ENCODE measurements at regions of chr7 and their contacts with region 1.

Region 1: GRCh38 chr7:48109848-48110663 is 21.0 kb downstream of the UPP1 start:
- DNase-seq: peak; percentile 64 to 75
- ATAC-seq: peak; percentile 63 to 82
- H3K4me3 ChIP-seq: no peak overlapping the region
- H3K27ac ChIP-seq: no peak overlapping the region
- H3K4me1 ChIP-seq: no peaks in the 10 kb centered on the region
- CTCF ChIP-seq: peak; percentile 98
- EP300 ChIP-seq: no peak
- POLR2A ChIP-seq: no peak
- RAD21 ChIP-seq: peak; percentile 96 to 97

Region 2: GRCh38 chr7:47937065-47937683 is 172.9 kb before region 1 on chr7:
- CTCF ChIA-PET with region 1: interaction called, 22 read pairs
- POLR2A ChIA-PET with region 1: no interaction called
- DNase-seq: no peak
- ATAC-seq: no peak
- H3K4me3 ChIP-seq: no peak overlapping the region
- H3K27ac ChIP-seq: no peak overlapping the region
- H3K4me1 ChIP-seq: peaks cover 13% of the 10 kb centered on the region
- CTCF ChIP-seq: no peak
- EP300 ChIP-seq: no peak
- POLR2A ChIP-seq: no peak
- RAD21 ChIP-seq: no peak

Region 3: GRCh38 chr7:47962262-47962661 is 147.8 kb before region 1 on chr7:
- CTCF ChIA-PET with region 1: interaction called, 13 read pairs
- POLR2A ChIA-PET with region 1: no interaction called
- DNase-seq: no peak
- ATAC-seq: no peak
- H3K4me3 ChIP-seq: no peak overlapping the region
- H3K27ac ChIP-seq: no peak overlapping the region
- H3K4me1 ChIP-seq: no peaks in the 10 kb centered on the region
- CTCF ChIP-seq: no peak
- EP300 ChIP-seq: no peak
- POLR2A ChIP-seq: no peak
- RAD21 ChIP-seq: no peak

Region 4: GRCh38 chr7:47991741-47992311 is 118.2 kb before region 1 on chr7:
- CTCF ChIA-PET with region 1: interaction called, 173 read pairs
- POLR2A ChIA-PET with region 1: no interaction called
- DNase-seq: peak; percentile 52 to 74
- ATAC-seq: peak; percentile 95 to 100
- H3K4me3 ChIP-seq: no peak overlapping the region
- H3K27ac ChIP-seq: no peak overlapping the region
- H3K4me1 ChIP-seq: no peaks in the 10 kb centered on the region
- CTCF ChIP-seq: peak; percentile 55
- EP300 ChIP-seq: no peak
- POLR2A ChIP-seq: no peak
- RAD21 ChIP-seq: peak; percentile 82 to 91

Region 5: GRCh38 chr7:48088559-48089045 is 21.5 kb before region 1 on chr7:
- CTCF ChIA-PET with region 1: interaction called, 177 read pairs
- POLR2A ChIA-PET with region 1: no interaction called
- DNase-seq: peak; percentile 89 to 98
- ATAC-seq: peak; percentile 73 to 83
- H3K4me3 ChIP-seq: peak overlapping the region; percentile 92
- H3K27ac ChIP-seq: peak overlapping the region; percentile 93 to 96
- H3K4me1 ChIP-seq: peaks cover 55% of the 10 kb centered on the region
- CTCF ChIP-seq: no peak
- EP300 ChIP-seq: peak; percentile 38 to 57; a peak in 2 of 5 replicates
- POLR2A ChIP-seq: no peak
- RAD21 ChIP-seq: peak; percentile 8 to 17; a peak in 2 of 5 replicates

Region 6: DNA sequence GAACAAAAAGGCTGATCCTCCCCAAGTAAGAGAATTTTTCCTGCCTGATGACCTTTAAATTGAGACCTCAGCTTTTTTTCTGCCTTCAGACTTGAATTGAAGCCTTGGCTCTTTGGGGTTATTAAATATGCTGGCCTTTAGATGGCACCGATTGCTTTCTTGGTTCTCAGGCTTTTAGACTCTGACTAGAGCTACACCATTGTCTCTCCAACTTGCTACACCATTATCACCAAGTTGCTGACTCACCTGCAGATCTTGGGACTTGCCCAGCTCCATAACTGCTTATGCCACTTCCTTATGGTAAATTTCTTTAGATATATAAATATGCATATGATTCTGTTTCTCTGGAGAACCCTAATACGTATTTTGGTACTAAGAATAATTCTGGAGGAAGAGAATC is 58.1 kb after region 1 on chr7:
- CTCF ChIA-PET with region 1: no interaction called
- POLR2A ChIA-PET with region 1: no interaction called
- DNase-seq: peak in 1 of 2 experiments; percentile 18
- ATAC-seq: no peak
- H3K4me3 ChIP-seq: no peak overlapping the region
- H3K27ac ChIP-seq: no peak overlapping the region
- H3K4me1 ChIP-seq: no peaks in the 10 kb centered on the region
- CTCF ChIP-seq: no peak
- EP300 ChIP-seq: no peak
- POLR2A ChIP-seq: no peak
- RAD21 ChIP-seq: no peak

Measured in A549 (cell line).